SK-N-SH (cell line): ENCODE measurements at regions of chr6 and their contacts with region 1.

Region 1: DNA sequence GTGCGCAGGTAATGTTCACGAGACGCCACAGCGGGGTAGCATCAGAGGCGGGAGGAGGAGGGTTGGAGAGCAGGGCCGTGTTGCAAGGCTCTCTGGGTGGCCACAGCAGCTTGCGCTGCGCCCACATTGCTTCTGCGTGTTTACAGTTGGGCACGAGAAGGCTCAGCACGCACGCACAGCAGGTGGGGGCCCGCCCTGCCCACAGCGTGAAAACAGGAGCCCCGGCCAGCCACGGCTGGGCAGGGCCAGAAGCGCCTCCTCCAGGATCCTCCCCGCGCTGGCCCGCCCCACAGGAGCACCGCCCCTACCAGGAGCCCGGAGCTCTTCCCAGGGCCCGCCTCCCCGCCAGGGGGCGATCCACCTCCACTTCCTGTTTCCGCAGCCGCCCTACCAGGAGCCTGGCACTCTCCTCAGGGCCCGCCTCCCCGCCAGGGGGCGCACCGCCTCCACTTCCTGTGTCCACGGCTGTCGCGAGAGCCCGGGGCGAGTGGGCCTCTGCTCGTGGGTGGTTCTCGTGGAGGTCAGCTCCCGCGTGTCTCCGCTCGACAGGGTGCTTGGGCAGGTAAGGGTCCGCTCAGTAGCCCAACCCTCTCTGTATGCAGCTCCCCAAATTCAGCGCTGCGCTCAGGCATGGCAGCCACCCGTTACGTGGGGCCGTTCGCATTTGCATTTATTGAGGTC is at the start of gene FAM50B:
- DNase-seq: peak; percentile 94
- H3K4me3 ChIP-seq: peak within 1 kb of the TSS; percentile 54
- H3K27ac ChIP-seq: peak within 1 kb of the TSS in 1 of 2 experiments; percentile 55; a peak in 1 of 4 replicates
- H3K4me1 ChIP-seq: peaks cover 8% of the 10 kb centered on the region in 2 experiments; a peak in 1 of 4 replicates
- H3K27me3 ChIP-seq: no peaks in the 10 kb centered on the region
- CTCF ChIP-seq: peak; percentile 80
- EP300 ChIP-seq: no peak
- RAD21 ChIP-seq: peak; percentile 62
- polyA plus RNA-seq, gene FAM50B: 12.9 and 13.8 TPM in 2 replicates

Region 2: GRCh38 chr6:3635482-3635881 is 213.6 kb before region 1 on chr6:
- CTCF ChIA-PET with region 1: no interaction called
- POLR2A ChIA-PET with region 1: no interaction called
- DNase-seq: no peak
- H3K4me3 ChIP-seq: no peak overlapping the region
- H3K27ac ChIP-seq: no peak overlapping the region
- H3K4me1 ChIP-seq: no peaks in the 10 kb centered on the region; a peak in 1 of 4 replicates
- H3K27me3 ChIP-seq: peaks cover 26% of the 10 kb centered on the region
- CTCF ChIP-seq: no peak
- EP300 ChIP-seq: no peak
- RAD21 ChIP-seq: no peak

Region 3: GRCh38 chr6:3742426-3743344 is 106.4 kb before region 1 on chr6:
- CTCF ChIA-PET with region 1: interaction called, 27 read pairs
- POLR2A ChIA-PET with region 1: no interaction called
- DNase-seq: peak; percentile 84
- H3K4me3 ChIP-seq: peak overlapping the region; percentile 12 to 48; a peak in 2 of 4 replicates
- H3K27ac ChIP-seq: peak overlapping the region in 1 of 2 experiments; percentile 31; a peak in 2 of 4 replicates
- H3K4me1 ChIP-seq: peaks cover 5 to 20% of the 10 kb centered on the region in 2 experiments; a peak in 2 of 4 replicates
- H3K27me3 ChIP-seq: no peaks in the 10 kb centered on the region
- CTCF ChIP-seq: peak; percentile 95
- EP300 ChIP-seq: no peak
- RAD21 ChIP-seq: peak; percentile 93

Region 4: GRCh38 chr6:3835055-3835731 is 13.9 kb before region 1 on chr6:
- CTCF ChIA-PET with region 1: interaction called, 13 read pairs
- POLR2A ChIA-PET with region 1: no interaction called
- DNase-seq: no peak
- H3K4me3 ChIP-seq: no peak overlapping the region
- H3K27ac ChIP-seq: no peak overlapping the region
- H3K4me1 ChIP-seq: peaks cover 0 to 8% of the 10 kb centered on the region in 2 experiments; a peak in 1 of 4 replicates
- H3K27me3 ChIP-seq: no peaks in the 10 kb centered on the region
- CTCF ChIP-seq: no peak
- EP300 ChIP-seq: no peak
- RAD21 ChIP-seq: no peak

Region 5: DNA sequence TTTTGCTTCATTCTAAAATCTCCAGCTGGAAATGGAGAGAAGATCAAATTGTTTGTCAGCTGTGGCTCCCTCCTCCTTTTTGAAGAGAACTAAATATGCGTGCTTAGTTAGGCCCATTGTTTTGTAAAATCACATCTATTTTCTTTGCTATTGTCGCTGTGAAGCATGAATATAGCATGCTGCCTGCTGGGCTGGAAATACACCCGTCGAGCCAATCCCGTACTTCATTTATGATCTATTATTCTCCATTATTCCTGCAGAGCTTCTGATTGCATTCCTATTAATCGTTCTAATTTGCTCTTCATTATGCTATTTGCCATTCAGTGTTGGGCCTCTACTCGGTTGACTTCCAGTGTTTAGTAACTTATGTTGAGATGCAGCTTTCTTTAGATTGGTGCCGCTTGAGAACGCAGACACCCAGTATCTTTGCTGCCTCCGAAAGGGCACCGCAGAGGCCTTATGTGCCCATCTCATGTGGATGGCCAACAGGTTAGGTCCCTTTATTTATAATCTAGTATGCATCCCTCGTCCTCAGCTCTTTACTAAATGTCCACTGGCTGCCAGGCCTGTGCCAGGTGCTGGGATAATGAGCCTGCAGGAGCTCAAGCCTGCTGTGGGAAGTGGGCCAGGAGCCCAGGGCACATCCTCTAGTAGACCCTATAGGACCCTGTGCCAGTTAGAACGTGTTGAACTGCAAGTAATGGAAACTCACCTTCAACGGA is 45.7 kb after region 1 on chr6:
- CTCF ChIA-PET with region 1: interaction called, 19 read pairs
- POLR2A ChIA-PET with region 1: no interaction called
- DNase-seq: no peak
- H3K4me3 ChIP-seq: no peak overlapping the region
- H3K27ac ChIP-seq: no peak overlapping the region
- H3K4me1 ChIP-seq: no peaks in the 10 kb centered on the region
- H3K27me3 ChIP-seq: no peaks in the 10 kb centered on the region
- CTCF ChIP-seq: no peak
- EP300 ChIP-seq: no peak
- RAD21 ChIP-seq: no peak

Region 6: DNA sequence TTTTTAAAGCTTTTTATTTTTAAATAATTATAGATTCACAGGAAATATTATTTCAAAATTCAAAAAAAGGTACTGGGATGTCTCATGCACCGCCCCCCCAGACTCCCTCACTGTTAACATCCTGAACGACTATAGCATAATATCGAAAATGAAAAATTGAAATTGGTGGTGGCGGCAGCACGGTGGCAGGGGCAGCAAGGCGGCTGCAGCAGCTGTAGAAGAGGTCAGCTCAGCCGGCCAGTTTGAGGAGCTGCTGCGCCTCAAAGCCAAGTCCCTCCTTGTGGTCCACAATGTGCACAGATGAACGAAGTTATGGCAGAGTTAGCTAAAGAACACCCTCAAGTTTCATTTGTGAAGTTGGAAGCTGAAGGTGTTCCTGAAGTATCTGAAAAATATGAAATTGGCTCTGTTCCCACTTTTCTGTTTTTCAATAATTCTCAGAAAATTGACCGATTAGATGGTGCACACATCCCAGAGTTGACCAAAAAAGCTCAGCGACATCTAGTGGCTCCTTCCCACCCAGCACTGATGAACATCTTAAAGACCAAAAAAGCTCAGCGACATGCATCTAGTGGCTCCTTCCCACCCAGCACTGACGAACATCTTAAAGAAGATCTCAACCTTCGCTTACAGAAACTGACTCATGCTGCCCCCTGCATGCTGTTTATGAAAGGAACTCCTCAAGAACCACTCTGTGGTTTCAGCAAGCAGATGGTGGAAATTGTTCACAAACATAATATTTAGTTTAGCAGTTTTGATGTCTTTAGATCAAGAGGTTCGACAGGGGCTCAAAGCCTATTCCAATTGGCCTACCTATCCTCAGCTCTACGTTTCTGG is 129.0 kb after region 1 on chr6:
- CTCF ChIA-PET with region 1: interaction called, 13 read pairs
- POLR2A ChIA-PET with region 1: no interaction called
- DNase-seq: no peak
- H3K4me3 ChIP-seq: no peak overlapping the region
- H3K27ac ChIP-seq: no peak overlapping the region
- H3K4me1 ChIP-seq: no peaks in the 10 kb centered on the region
- H3K27me3 ChIP-seq: no peaks in the 10 kb centered on the region
- CTCF ChIP-seq: peak; percentile 48
- EP300 ChIP-seq: no peak
- RAD21 ChIP-seq: peak; percentile 30; the same call in 1 of the 2 replicates

Region 7: DNA sequence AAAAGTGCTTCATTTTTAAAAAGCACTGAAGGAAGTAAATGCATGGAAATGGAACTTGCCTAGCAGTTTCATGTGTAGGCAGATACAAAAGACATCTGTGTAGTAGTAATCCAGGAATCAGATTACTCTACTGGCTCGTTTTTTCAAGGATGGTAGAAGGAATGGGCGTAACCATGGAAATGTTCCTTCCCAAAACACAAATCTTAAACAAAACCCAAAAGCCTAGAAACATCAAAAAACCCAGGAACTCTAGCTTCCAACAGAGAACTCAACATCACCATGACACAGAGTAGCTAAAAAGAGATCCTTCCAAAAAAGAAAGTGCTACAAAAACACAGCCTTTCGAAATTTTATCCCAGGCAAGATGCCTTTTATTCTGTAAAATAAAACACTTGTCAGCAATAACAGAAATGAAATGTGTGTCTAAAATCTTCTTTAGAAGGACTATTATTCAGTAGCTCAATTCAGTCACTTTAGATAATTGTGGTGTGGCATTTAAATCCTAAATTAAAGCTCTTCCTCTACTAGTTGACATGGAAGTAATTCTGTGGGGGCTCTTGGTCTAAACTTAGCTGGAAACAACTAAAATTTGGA is 148.2 kb after region 1 on chr6:
- CTCF ChIA-PET with region 1: interaction called, 14 read pairs
- POLR2A ChIA-PET with region 1: no interaction called
- DNase-seq: no peak
- H3K4me3 ChIP-seq: no peak overlapping the region
- H3K27ac ChIP-seq: peak overlapping the region in 1 of 2 experiments; percentile 46; a peak in 1 of 4 replicates
- H3K4me1 ChIP-seq: peaks cover 0 to 7% of the 10 kb centered on the region in 2 experiments; a peak in 1 of 4 replicates
- H3K27me3 ChIP-seq: no peaks in the 10 kb centered on the region
- CTCF ChIP-seq: no peak
- EP300 ChIP-seq: no peak
- RAD21 ChIP-seq: no peak

Region 8: DNA sequence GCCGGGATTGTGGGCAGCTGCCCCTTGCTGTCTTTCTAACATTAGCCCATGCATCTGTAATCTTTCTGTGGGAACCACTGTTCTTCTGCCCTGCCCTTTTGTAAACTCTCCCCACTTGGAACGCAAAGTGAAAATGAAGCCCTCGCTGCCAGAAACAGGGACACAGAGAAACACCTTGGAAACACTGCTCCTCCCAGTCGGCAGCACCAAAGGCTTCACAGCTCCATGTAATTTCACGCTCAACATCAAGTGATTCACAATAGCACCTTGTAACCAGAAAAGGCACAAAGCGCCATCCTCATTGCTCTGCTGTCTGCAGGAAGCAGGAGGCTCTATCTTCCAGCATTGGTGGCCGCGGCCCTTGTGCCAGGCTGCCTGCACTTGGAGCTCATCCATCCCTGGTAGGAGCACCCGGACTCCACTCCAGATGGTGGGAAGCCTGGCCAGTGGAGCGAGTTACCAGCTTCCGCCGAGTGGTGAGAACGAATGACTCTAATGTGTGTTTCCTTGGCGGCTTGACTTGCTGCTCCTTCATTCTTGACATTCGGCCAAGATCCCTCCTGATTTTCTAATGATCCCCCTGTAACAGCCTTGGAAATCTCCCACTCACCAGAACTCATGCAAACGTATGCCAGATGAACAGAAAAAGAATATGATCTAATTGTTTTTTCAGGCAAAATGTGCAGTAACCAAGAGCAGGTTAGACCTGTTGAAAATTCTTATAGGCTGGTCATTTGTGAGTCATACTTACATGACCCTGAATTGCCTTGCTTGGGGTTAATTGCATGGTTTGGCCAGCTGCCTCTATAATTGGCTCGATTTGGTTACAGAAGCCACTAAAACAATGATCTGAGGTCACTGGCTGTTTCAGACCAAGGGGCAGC is 758.0 kb after region 1 on chr6:
- CTCF ChIA-PET with region 1: no interaction called
- POLR2A ChIA-PET with region 1: no interaction called
- DNase-seq: no peak
- H3K4me3 ChIP-seq: no peak overlapping the region; a peak in 1 of 4 replicates
- H3K27ac ChIP-seq: no peak overlapping the region
- H3K4me1 ChIP-seq: peaks cover 2 to 6% of the 10 kb centered on the region in 2 experiments; a peak in 2 of 4 replicates
- H3K27me3 ChIP-seq: no peaks in the 10 kb centered on the region
- CTCF ChIP-seq: no peak
- EP300 ChIP-seq: no peak
- RAD21 ChIP-seq: no peak